Activated naive CD4-positive, alpha-beta T cell treated with anti-CD3 and anti-CD28 coated beads for 36 hours (primary cell): ENCODE measurements at regions of chr7 and their contacts with region 1.

Region 1: DNA sequence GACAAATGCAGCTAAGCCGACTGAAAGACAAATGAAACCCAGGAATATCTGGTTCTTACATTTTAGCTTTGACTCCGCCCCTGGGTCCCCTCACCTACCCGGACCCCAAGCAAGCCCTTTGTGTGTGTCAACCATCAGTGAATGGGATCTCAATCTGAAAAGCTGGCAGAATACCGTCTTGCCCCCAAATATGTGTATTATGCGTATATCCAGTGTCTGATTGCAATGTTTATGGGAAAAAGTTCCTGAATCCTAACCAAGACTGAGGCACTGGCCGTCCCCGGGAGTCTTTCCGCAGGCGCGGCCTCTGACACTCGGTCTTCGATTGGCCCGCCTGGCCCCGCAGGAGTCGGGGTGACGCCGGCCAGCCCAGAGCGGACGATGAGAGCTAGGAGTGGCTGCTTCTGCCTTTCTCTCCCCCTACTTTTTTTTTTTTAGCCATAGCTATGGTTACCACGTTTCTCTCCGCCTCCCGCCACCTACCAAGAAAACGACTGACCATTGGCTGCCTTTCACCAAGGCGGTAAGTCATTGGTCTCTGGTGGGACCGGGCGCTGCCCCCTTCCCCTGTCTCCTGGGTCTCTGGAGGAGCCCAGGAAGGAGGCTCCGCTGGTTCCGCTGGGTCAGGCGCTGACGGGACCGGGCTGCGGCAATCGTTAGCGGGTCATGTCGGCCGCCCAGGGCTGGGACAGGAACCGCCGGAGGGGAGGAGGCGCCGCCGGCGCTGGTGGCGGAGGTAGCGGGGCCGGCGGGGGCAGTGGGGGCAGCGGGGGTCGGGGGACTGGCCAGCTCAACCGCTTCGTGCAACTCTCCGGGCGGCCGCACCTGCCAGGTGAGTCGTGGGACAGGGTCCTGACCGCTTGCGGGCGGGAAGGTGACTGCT is at the start of gene KLHDC10:
- DNase-seq: peak; percentile 98
- H3K4me3 Mint-ChIP-seq: peak within 1 kb of the TSS; percentile 79
- H3K27ac Mint-ChIP-seq: peak within 1 kb of the TSS; percentile 70
- H3K4me1 Mint-ChIP-seq: peaks cover 38% of the 10 kb centered on the region
- H3K27me3 Mint-ChIP-seq: no peaks in the 10 kb centered on the region
- total RNA-seq, gene KLHDC10: 11.6 to 12.9 TPM

Region 2: GRCh38 chr7:129926618-129927017 is 143.6 kb before region 1 on chr7:
- CTCF ChIA-PET with region 1: no interaction called
- intact Hi-C with region 1: no loop called
- DNase-seq: no peak
- H3K4me3 Mint-ChIP-seq: no peak overlapping the region
- H3K27ac Mint-ChIP-seq: no peak overlapping the region
- H3K4me1 Mint-ChIP-seq: peaks cover 27% of the 10 kb centered on the region
- H3K27me3 Mint-ChIP-seq: no peaks in the 10 kb centered on the region

Region 3: GRCh38 chr7:130084037-130084875 is 14.0 kb after region 1 on chr7:
- CTCF ChIA-PET with region 1: interaction called, 32 read pairs
- intact Hi-C with region 1: no loop called
- DNase-seq: no peak
- H3K4me3 Mint-ChIP-seq: no peak overlapping the region
- H3K27ac Mint-ChIP-seq: no peak overlapping the region
- H3K4me1 Mint-ChIP-seq: peaks cover 21% of the 10 kb centered on the region
- H3K27me3 Mint-ChIP-seq: no peaks in the 10 kb centered on the region

Region 4: DNA sequence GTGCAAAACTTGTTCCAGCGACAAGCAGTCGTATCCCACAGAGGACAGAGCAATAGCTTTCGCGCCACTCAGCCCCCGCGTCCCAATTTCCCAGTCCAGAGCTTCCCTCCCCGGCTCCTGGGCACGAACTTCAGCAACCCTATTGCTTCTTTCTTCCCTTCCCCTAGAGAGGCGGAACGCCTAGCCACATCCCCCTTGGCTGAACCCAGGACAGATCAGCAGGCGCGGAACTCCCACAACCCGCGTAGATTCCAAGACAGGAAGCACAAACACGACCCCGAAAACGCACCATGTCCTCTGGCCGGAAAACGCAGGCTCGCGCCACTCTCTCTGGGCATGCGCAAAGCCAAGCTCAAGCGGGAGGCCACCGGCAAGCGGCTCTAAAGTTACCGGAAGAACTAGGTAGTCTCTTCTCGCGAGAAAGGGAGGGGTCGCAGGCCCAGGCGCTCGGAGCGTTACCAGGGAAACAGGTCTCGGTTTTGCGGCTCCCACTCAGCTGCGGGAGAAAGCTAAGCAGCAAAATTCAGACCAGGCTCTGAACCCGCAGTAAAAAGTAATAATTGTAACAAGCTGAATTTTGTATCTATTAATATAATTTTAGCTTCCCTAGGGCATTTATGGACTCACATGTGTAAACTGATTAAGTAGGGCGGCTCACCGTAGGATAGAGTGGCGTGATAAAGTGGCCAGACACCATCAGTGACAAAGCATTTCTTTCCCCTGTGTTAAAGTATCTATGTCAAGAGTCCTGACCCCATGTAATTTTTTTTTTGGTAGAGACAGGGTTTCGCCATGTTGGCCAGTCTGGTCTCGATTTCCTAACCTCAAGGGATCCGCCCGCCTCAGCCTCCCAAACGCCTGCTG is 135.1 kb after region 1 on chr7 and contains the start of gene TMEM209:
- CTCF ChIA-PET with region 1: interaction called, 5 read pairs
- intact Hi-C with region 1: loop called (anchors 1 kb)
- DNase-seq: peak; percentile 97
- H3K4me3 Mint-ChIP-seq: peak within 1 kb of the TSS; percentile 98
- H3K27ac Mint-ChIP-seq: peak within 1 kb of the TSS; percentile 98
- H3K4me1 Mint-ChIP-seq: peaks cover 33% of the 10 kb centered on the region
- H3K27me3 Mint-ChIP-seq: no peaks in the 10 kb centered on the region
- total RNA-seq, gene TMEM209: 36.0 to 37.3 TPM

Region 5: GRCh38 chr7:130440527-130441365 is 370.5 kb after region 1 on chr7 and contains the start of gene CEP41:
- CTCF ChIA-PET with region 1: no interaction called
- intact Hi-C with region 1: loop called (anchors 5 kb)
- DNase-seq: peak; percentile 98
- H3K4me3 Mint-ChIP-seq: peak within 1 kb of the TSS; percentile 98
- H3K27ac Mint-ChIP-seq: peak within 1 kb of the TSS; percentile 98
- H3K4me1 Mint-ChIP-seq: peaks cover 50% of the 10 kb centered on the region
- H3K27me3 Mint-ChIP-seq: no peaks in the 10 kb centered on the region
- total RNA-seq, gene CEP41: 16.0 to 18.2 TPM

Region 6: GRCh38 chr7:130758429-130759056 is 688.3 kb after region 1 on chr7:
- CTCF ChIA-PET with region 1: interaction called, 8 read pairs
- intact Hi-C with region 1: loop called (anchors 1 kb)
- DNase-seq: no peak
- H3K4me3 Mint-ChIP-seq: no peak overlapping the region
- H3K27ac Mint-ChIP-seq: no peak overlapping the region
- H3K4me1 Mint-ChIP-seq: no peaks in the 10 kb centered on the region
- H3K27me3 Mint-ChIP-seq: peaks cover 3% of the 10 kb centered on the region